ENCODE measurements at regions of chr18 and their contacts with region 1.

Region 1: GRCh38 chr18:32552421-32553030 is 81.8 kb upstream of the GAREM1 start:
- DNase-seq: peak; percentile 3 to 77 (median 55)
- ATAC-seq: peak; percentile 69
- H3K4me3 ChIP-seq: no peak overlapping the region
- H3K4me3 Mint-ChIP-seq: no peak overlapping the region
- H3K27ac ChIP-seq: no peak overlapping the region
- H3K27ac Mint-ChIP-seq: no peak overlapping the region
- H3K4me1 ChIP-seq: no peaks in the 10 kb centered on the region
- H3K4me1 Mint-ChIP-seq: peaks cover 2% of the 10 kb centered on the region
- H3K27me3 ChIP-seq: no peaks in the 10 kb centered on the region
- H3K27me3 Mint-ChIP-seq: peaks cover 16% of the 10 kb centered on the region
- CTCF ChIP-seq: peak; percentile 77

Region 2: DNA sequence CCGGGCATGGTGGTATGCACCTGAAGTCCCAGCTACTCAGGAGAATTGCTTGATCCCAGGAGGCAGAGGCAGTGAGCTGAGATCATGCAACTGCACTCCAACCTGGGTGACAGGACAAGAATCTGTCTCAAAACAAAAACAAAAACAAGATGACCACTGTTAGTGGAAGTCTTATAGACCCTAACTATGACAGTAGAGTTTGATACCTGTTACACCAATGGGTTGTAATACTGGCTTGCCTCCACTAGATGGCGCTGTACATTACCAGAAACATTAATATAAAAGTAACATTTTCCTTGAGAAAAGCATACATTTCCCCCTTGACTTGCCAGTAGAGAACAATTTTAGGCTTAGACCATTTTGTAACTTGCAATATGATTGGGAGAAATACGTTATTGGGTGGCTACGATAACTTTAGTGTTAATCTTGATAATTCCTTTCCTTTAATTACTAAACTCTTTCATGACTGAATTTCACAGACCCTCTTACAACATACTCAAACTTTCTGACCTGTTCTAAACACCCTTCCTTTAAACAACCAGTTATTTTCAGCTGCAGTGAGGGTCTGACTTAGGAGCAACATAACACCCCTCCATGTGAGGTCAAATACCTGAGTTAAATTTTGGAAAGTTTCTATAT is 811.3 kb before region 1 on chr18:
- CTCF ChIA-PET with region 1: interaction called, 3 read pairs
- POLR2A ChIA-PET with region 1: no interaction called
- intact Hi-C with region 1: loop called in 1 of 2 experiments (anchors 2 kb)
- DNase-seq: peak in 8 of 9 experiments; percentile 32 to 70 (median 56)
- ATAC-seq: peak; percentile 51
- H3K4me3 ChIP-seq: no peak overlapping the region
- H3K4me3 Mint-ChIP-seq: no peak overlapping the region
- H3K27ac ChIP-seq: no peak overlapping the region
- H3K27ac Mint-ChIP-seq: no peak overlapping the region
- H3K4me1 ChIP-seq: no peaks in the 10 kb centered on the region
- H3K4me1 Mint-ChIP-seq: no peaks in the 10 kb centered on the region
- H3K27me3 ChIP-seq: no peaks in the 10 kb centered on the region
- H3K27me3 Mint-ChIP-seq: no peaks in the 10 kb centered on the region
- CTCF ChIP-seq: peak; percentile 98

Region 3: DNA sequence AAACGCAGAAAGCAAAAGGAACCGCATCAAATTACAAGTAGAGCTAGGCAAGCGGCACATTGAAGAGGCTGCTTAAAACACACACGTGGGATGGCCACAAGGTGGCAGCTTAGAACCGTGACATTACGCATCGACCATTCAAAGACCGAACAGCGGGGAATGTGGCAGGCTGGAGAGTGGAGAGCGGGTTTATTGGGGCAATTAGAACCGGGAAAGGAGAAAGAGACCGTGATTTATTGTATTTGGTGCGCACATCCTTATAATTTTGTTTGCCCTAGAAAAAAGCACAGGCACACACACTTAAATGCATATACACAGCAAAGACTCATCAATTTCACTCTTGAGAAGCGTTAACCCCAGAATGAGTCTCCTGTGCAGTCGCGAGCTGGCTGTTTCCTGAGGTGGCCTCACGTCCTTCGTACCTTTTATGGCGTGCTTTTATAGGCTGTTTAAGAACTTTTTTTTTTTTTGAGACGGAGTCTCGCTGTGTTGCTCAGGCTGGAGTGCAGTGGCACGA is 394.4 kb before region 1 on chr18:
- CTCF ChIA-PET with region 1: interaction called, 94 read pairs
- POLR2A ChIA-PET with region 1: interaction called, 6 read pairs
- intact Hi-C with region 1: loop called in 1 of 2 experiments (anchors 1 kb)
- DNase-seq: peak; percentile 46 to 86 (median 69)
- ATAC-seq: peak; percentile 93
- H3K4me3 ChIP-seq: peak overlapping the region; percentile 30 to 34
- H3K4me3 Mint-ChIP-seq: peak overlapping the region; percentile 75
- H3K27ac ChIP-seq: no peak overlapping the region
- H3K27ac Mint-ChIP-seq: no peak overlapping the region
- H3K4me1 ChIP-seq: no peaks in the 10 kb centered on the region
- H3K4me1 Mint-ChIP-seq: peaks cover 6% of the 10 kb centered on the region
- H3K27me3 ChIP-seq: peaks cover 0 to 4% of the 10 kb centered on the region in 2 experiments
- H3K27me3 Mint-ChIP-seq: peaks cover 4% of the 10 kb centered on the region
- CTCF ChIP-seq: peak; percentile 81

Region 4: GRCh38 chr18:32271672-32272208 is 280.8 kb before region 1 on chr18:
- CTCF ChIA-PET with region 1: interaction called, 16 read pairs
- POLR2A ChIA-PET with region 1: no interaction called
- intact Hi-C with region 1: loop called (anchors 1 kb)
- DNase-seq: peak in 2 of 9 experiments; percentile 9 to 27
- ATAC-seq: no peak
- H3K4me3 ChIP-seq: no peak overlapping the region
- H3K4me3 Mint-ChIP-seq: no peak overlapping the region
- H3K27ac ChIP-seq: no peak overlapping the region
- H3K27ac Mint-ChIP-seq: no peak overlapping the region
- H3K4me1 ChIP-seq: no peaks in the 10 kb centered on the region
- H3K4me1 Mint-ChIP-seq: no peaks in the 10 kb centered on the region
- H3K27me3 ChIP-seq: no peaks in the 10 kb centered on the region
- H3K27me3 Mint-ChIP-seq: peaks cover 11% of the 10 kb centered on the region
- CTCF ChIP-seq: peak; percentile 33

Region 5: GRCh38 chr18:32566960-32567359 is 14.4 kb after region 1 on chr18:
- CTCF ChIA-PET with region 1: interaction called, 14 read pairs
- POLR2A ChIA-PET with region 1: no interaction called
- intact Hi-C with region 1: no loop called
- DNase-seq: no peak
- ATAC-seq: no peak
- H3K4me3 ChIP-seq: no peak overlapping the region
- H3K4me3 Mint-ChIP-seq: no peak overlapping the region
- H3K27ac ChIP-seq: no peak overlapping the region
- H3K27ac Mint-ChIP-seq: no peak overlapping the region
- H3K4me1 ChIP-seq: no peaks in the 10 kb centered on the region
- H3K4me1 Mint-ChIP-seq: no peaks in the 10 kb centered on the region
- H3K27me3 ChIP-seq: no peaks in the 10 kb centered on the region
- H3K27me3 Mint-ChIP-seq: peaks cover 3% of the 10 kb centered on the region
- CTCF ChIP-seq: no peak

Region 6: GRCh38 chr18:32607816-32608215 is 55.3 kb after region 1 on chr18:
- CTCF ChIA-PET with region 1: no interaction called
- POLR2A ChIA-PET with region 1: no interaction called
- intact Hi-C with region 1: no loop called
- DNase-seq: no peak
- ATAC-seq: no peak
- H3K4me3 ChIP-seq: no peak overlapping the region
- H3K4me3 Mint-ChIP-seq: no peak overlapping the region
- H3K27ac ChIP-seq: no peak overlapping the region
- H3K27ac Mint-ChIP-seq: no peak overlapping the region
- H3K4me1 ChIP-seq: no peaks in the 10 kb centered on the region
- H3K4me1 Mint-ChIP-seq: no peaks in the 10 kb centered on the region
- H3K27me3 ChIP-seq: no peaks in the 10 kb centered on the region
- H3K27me3 Mint-ChIP-seq: peaks cover 9% of the 10 kb centered on the region
- CTCF ChIP-seq: no peak

Region 7: GRCh38 chr18:33146014-33146413 is 593.5 kb after region 1 on chr18:
- CTCF ChIA-PET with region 1: no interaction called
- POLR2A ChIA-PET with region 1: no interaction called
- intact Hi-C with region 1: no loop called
- DNase-seq: peak in 1 of 9 experiments; percentile 2
- ATAC-seq: no peak
- H3K4me3 ChIP-seq: no peak overlapping the region
- H3K4me3 Mint-ChIP-seq: no peak overlapping the region
- H3K27ac ChIP-seq: no peak overlapping the region
- H3K27ac Mint-ChIP-seq: no peak overlapping the region
- H3K4me1 ChIP-seq: no peaks in the 10 kb centered on the region
- H3K4me1 Mint-ChIP-seq: no peaks in the 10 kb centered on the region
- H3K27me3 ChIP-seq: no peaks in the 10 kb centered on the region
- H3K27me3 Mint-ChIP-seq: no peaks in the 10 kb centered on the region
- CTCF ChIP-seq: no peak